ENCODE measurements at regions of chr9 and their contacts with region 1.

Region 1: DNA sequence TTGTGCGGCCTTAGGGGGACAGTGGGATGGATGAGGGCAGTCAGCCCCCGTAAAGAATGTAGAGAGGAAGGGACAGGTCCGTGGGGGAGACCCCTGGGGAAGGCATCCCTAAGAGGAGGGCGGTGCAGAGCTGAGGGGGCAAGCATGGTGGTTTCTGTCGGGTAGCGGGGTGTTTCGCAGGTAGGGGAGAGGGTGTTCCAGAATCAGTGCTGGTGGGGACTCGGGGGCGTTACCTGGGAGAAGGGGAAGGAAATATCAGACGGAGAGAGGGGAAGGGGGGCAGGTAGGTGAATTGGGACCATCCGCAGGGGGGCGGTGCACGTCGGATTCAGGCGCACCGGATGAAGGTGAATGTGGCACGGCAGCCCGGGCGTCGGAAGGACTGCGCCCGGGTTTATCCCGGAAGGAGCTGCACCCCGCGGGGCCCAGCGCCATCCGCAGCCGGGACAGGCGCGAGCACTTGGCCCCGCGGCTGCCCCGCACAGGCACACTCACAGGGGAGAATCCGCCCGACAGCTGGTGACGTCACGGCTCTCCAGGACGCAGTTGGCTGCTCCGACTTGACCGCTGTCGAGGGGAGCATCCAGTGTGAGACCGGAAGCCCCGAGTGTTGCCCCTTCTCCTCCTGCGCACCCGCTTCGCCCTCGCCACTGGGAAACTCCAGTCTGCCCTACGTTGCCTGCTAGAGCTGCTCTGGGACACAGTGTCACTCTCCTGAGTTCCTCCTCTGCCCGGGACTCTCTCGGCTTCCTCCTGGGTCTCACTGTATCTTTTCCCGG is 1.3 kb downstream of the CD72 start:
- DNase-seq: peak; percentile 63 to 75 (median 64)
- H3K4me3 ChIP-seq: peak overlapping the region; percentile 63 to 64
- H3K4me3 Mint-ChIP-seq: peak overlapping the region; percentile 84 to 91 (median 88)
- H3K27ac ChIP-seq: peak overlapping the region; percentile 60
- H3K27ac Mint-ChIP-seq: peak overlapping the region; percentile 89 to 95 (median 93)
- H3K4me1 ChIP-seq: peaks cover 36% of the 10 kb centered on the region
- H3K4me1 Mint-ChIP-seq: peaks cover 26 to 58% (median 35%) of the 10 kb centered on the region in 4 donors
- H3K27me3 ChIP-seq: no peaks in the 10 kb centered on the region
- H3K27me3 Mint-ChIP-seq: no peaks in the 10 kb centered on the region

Region 2: GRCh38 chr9:35026671-35027070 is 590.2 kb before region 1 on chr9:
- CTCF ChIA-PET with region 1: no interaction called
- POLR2A ChIA-PET with region 1: no interaction called
- intact Hi-C with region 1: no loop called
- DNase-seq: no peak
- H3K4me3 ChIP-seq: no peak overlapping the region
- H3K4me3 Mint-ChIP-seq: no peak overlapping the region
- H3K27ac ChIP-seq: no peak overlapping the region
- H3K27ac Mint-ChIP-seq: peak overlapping the region in 1 of 7 donors; percentile 40
- H3K4me1 ChIP-seq: peaks cover 6% of the 10 kb centered on the region
- H3K4me1 Mint-ChIP-seq: peaks cover 1 to 14% (median 8%) of the 10 kb centered on the region in 4 donors
- H3K27me3 ChIP-seq: no peaks in the 10 kb centered on the region
- H3K27me3 Mint-ChIP-seq: no peaks in the 10 kb centered on the region

Region 3: GRCh38 chr9:35508069-35508468 is 108.8 kb before region 1 on chr9:
- CTCF ChIA-PET with region 1: no interaction called
- POLR2A ChIA-PET with region 1: no interaction called
- intact Hi-C with region 1: no loop called
- DNase-seq: no peak
- H3K4me3 ChIP-seq: no peak overlapping the region
- H3K4me3 Mint-ChIP-seq: no peak overlapping the region
- H3K27ac ChIP-seq: no peak overlapping the region
- H3K27ac Mint-ChIP-seq: no peak overlapping the region
- H3K4me1 ChIP-seq: no peaks in the 10 kb centered on the region
- H3K4me1 Mint-ChIP-seq: no peaks in the 10 kb centered on the region
- H3K27me3 ChIP-seq: no peaks in the 10 kb centered on the region
- H3K27me3 Mint-ChIP-seq: peaks cover 11 to 20% of the 10 kb centered on the region in 2 donors

Region 4: DNA sequence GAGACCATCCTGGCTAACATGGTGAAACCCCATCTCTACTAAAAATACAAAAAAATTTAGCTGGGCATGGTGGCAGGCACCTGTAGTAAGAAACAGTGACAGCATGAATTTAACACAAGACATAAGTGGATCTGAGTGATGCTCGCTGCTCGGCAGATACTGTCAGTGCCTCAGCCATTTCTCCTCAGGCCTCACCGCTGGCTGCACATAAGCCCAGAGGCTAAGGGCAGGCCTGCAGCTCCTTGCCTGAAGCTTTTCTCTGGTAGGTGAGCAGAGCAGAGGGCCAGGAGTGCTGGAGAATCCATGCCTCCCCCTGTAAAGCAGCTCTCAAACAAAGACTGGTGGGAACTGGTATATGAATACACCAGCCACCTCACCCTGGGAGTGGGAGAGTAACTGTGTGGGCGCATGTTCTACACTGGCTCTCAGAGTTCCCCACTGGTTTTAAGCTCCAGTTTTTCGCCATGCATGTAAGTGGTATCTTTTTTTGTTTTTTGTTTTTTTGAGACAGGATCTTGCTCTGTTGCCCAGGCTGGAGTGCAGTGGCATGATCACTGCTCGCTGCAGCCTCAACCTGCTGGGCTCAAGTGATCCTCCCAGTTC is 11.6 kb after region 1 on chr9:
- CTCF ChIA-PET with region 1: interaction called, 13 read pairs
- POLR2A ChIA-PET with region 1: interaction called, 8 read pairs
- intact Hi-C with region 1: no loop called
- DNase-seq: no peak
- H3K4me3 ChIP-seq: no peak overlapping the region
- H3K4me3 Mint-ChIP-seq: no peak overlapping the region
- H3K27ac ChIP-seq: no peak overlapping the region
- H3K27ac Mint-ChIP-seq: no peak overlapping the region
- H3K4me1 ChIP-seq: no peaks in the 10 kb centered on the region
- H3K4me1 Mint-ChIP-seq: peaks cover 0 to 6% (median 2%) of the 10 kb centered on the region in 4 donors
- H3K27me3 ChIP-seq: no peaks in the 10 kb centered on the region
- H3K27me3 Mint-ChIP-seq: no peaks in the 10 kb centered on the region

Region 5: GRCh38 chr9:35818341-35818740 is 201.5 kb after region 1 on chr9:
- CTCF ChIA-PET with region 1: no interaction called
- POLR2A ChIA-PET with region 1: no interaction called
- intact Hi-C with region 1: no loop called
- DNase-seq: no peak
- H3K4me3 ChIP-seq: no peak overlapping the region
- H3K4me3 Mint-ChIP-seq: peak overlapping the region in 2 of 8 donors; percentile 2 to 6
- H3K27ac ChIP-seq: no peak overlapping the region
- H3K27ac Mint-ChIP-seq: peak overlapping the region in 1 of 7 donors; percentile 7
- H3K4me1 ChIP-seq: peaks cover 11% of the 10 kb centered on the region
- H3K4me1 Mint-ChIP-seq: peaks cover 8 to 22% (median 14%) of the 10 kb centered on the region in 4 donors
- H3K27me3 ChIP-seq: no peaks in the 10 kb centered on the region
- H3K27me3 Mint-ChIP-seq: no peaks in the 10 kb centered on the region

Measured in CD4-positive, alpha-beta memory T cell (primary cell).